A673 (cell line): ENCODE measurements at regions of chr5 and their contacts with region 1.

Region 1: GRCh38 chr5:86679529-86679928 is 61.8 kb downstream of the COX7C start:
- DNase-seq: peak; percentile 80
- H3K4me3 ChIP-seq: no peak overlapping the region
- H3K27ac ChIP-seq: no peak overlapping the region
- H3K4me1 ChIP-seq: peaks cover 16% of the 10 kb centered on the region
- H3K27me3 ChIP-seq: no peaks in the 10 kb centered on the region
- CTCF ChIP-seq: peak; percentile 78

Region 2: GRCh38 chr5:86500947-86501346 is 178.6 kb before region 1 on chr5:
- CTCF ChIA-PET with region 1: no interaction called
- POLR2A ChIA-PET with region 1: no interaction called
- intact Hi-C with region 1: loop called (anchors 5 kb)
- DNase-seq: peak; percentile 48
- H3K4me3 ChIP-seq: no peak overlapping the region
- H3K27ac ChIP-seq: no peak overlapping the region
- H3K4me1 ChIP-seq: no peaks in the 10 kb centered on the region
- H3K27me3 ChIP-seq: no peaks in the 10 kb centered on the region
- CTCF ChIP-seq: peak; percentile 54